CD14-positive monocyte (primary cell): ENCODE measurements at regions of chr11 and their contacts with region 1.

Region 1: GRCh38 chr11:66022401-66023185 is 3.7 kb downstream of the CATSPER1 start:
- DNase-seq: peak; percentile 65 to 76 (median 70)
- H3K4me3 ChIP-seq: peak overlapping the region in 1 of 3 experiments; percentile 42
- H3K4me3 Mint-ChIP-seq: peak overlapping the region; percentile 57 to 84
- H3K27ac ChIP-seq: no peak overlapping the region
- H3K27ac Mint-ChIP-seq: peak overlapping the region in 5 of 7 donors; percentile 30 to 93 (median 77)
- H3K4me1 ChIP-seq: peaks cover 31 to 32% of the 10 kb centered on the region in 2 donors
- H3K4me1 Mint-ChIP-seq: peaks cover 31% of the 10 kb centered on the region
- H3K27me3 ChIP-seq: peaks cover 0 to 4% of the 10 kb centered on the region in 2 donors
- H3K27me3 Mint-ChIP-seq: peaks cover 11 to 14% (median 13%) of the 10 kb centered on the region in 3 donors
- CTCF ChIP-seq: peak; percentile 98

Region 2: DNA sequence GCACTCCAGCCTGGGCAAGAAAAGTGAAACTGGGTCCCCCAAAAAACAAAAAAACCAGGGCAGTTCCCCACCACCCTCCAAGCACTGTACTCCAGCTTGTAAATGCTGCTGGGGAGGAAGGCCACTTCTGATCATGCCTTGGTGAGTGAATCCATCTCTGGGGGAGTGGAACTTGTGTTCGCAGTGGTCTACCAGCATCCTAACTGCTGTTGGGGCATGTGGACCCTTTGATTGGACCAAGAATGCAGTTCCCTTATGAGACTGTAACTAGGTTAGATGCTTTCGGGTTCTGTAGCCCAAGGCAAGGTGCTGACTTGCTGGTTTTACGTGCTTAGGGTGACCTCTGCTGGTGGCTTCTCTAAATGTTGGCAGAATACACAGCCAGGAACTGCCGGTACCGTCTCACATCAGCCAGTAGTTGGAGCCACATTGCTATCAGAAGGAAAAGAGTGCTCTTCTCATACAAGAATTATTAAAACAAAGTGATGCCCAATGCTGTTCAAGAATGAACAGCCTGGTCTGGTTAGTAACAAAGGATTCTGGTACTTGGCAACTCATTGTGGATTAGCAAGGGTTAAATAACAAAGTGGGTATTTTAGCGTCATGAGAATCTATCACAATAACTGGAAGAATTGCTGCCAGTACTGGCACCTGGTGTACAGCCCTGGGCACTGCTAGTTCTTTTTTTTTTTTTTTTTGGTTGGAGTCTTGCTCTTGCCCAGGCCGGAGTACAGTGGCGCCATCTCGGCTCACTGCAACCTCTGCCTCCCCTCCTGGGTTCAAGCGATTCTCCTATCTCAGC is 33.6 kb before region 1 on chr11:
- intact Hi-C with region 1: loop called in 1 of 2 experiments (anchors 5 kb)
- DNase-seq: peak; percentile 90 to 92 (median 90)
- H3K4me3 ChIP-seq: no peak overlapping the region
- H3K4me3 Mint-ChIP-seq: no peak overlapping the region
- H3K27ac ChIP-seq: peak overlapping the region; percentile 5 to 31
- H3K27ac Mint-ChIP-seq: peak overlapping the region; percentile 48 to 87 (median 75)
- H3K4me1 ChIP-seq: peaks cover 16 to 24% of the 10 kb centered on the region in 2 donors
- H3K4me1 Mint-ChIP-seq: peaks cover 12% of the 10 kb centered on the region
- H3K27me3 ChIP-seq: no peaks in the 10 kb centered on the region
- H3K27me3 Mint-ChIP-seq: no peaks in the 10 kb centered on the region
- CTCF ChIP-seq: peak; percentile 99